ENCODE measurements at regions of chr11 and their contacts with region 1.

Region 1: DNA sequence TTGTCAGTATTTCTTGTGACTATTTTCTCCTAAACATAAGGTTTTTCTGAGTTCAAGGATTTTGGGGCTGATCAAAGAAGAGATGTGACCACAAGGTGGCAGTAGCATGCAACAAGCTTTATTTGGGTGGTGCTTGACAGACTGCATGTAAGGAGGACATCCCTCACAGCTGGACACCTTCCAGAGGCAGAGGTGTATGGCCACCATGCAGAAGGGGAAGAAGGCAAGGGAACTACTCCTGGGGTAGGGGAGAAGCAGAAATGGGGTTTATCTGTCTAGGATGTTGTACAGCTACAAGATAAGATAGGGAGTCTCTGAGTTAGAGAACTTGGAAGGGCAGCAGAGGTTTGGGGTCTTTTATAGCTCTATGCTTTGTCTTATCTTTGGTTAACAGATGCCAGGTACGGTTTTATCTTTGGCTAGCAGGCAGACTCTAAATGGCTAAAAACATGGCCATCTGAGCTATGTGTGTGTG is 5.1 kb upstream of the BIRC2 start:
- DNase-seq: peak in 6 of 10 donors; percentile 45 to 82 (median 67)

Region 2: DNA sequence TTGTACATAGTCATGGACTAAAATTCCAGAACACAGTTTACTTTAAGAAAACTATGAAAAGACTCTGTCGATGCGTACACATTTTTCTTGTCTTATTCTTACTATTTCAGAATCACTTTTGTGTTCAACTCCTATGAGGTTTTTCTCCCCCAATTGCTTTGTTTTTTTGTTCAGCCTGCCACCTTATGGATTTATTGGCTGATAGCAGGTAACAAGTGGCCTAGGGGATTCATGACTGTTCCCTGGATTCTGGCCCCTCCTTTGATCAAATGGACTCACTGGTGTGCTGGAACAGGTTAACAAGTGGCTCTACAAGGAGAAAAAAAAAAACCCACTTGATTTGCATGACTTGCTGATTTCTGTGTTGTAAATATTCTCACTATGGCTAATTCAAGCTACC is 272.6 kb after region 1 on chr11:
- intact Hi-C with region 1: loop called (anchors 5 kb)
- DNase-seq: no peak

Region 3: DNA sequence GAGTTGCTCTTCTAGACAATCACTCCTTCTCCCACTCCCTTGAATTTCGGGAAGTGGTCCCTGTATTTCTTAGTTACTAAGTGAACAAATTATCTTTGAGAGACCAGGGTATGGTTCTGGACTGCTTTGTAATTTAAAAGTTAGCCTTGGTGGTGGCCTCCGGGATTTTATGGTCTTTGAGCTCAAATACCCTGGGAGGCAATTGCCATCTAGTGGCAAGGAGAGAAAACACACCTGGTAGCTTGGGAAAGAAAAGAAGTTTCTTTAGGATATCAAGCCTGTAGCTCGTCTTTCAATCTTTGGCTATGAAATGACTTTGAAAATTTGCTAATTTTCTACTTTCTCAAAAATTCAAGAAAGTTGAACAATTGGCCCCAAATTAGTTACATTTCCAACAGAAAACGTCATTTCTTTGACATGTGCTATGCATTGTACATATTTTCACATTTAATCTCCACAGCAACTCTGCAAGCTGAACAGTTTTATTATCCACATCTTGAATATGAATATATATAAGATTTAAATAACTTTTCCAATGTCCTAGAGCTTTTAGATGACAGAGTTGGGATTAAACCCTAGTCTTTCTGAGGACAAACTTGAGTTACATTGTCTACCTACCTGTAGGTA is 324.6 kb after region 1 on chr11:
- intact Hi-C with region 1: loop called (anchors 1 kb)
- DNase-seq: peak in 1 of 10 donors; percentile 17